Cardiac septum (tissue), 1 donor: ENCODE measurements at regions of chr5 and their contacts with region 1.

Region 1: DNA sequence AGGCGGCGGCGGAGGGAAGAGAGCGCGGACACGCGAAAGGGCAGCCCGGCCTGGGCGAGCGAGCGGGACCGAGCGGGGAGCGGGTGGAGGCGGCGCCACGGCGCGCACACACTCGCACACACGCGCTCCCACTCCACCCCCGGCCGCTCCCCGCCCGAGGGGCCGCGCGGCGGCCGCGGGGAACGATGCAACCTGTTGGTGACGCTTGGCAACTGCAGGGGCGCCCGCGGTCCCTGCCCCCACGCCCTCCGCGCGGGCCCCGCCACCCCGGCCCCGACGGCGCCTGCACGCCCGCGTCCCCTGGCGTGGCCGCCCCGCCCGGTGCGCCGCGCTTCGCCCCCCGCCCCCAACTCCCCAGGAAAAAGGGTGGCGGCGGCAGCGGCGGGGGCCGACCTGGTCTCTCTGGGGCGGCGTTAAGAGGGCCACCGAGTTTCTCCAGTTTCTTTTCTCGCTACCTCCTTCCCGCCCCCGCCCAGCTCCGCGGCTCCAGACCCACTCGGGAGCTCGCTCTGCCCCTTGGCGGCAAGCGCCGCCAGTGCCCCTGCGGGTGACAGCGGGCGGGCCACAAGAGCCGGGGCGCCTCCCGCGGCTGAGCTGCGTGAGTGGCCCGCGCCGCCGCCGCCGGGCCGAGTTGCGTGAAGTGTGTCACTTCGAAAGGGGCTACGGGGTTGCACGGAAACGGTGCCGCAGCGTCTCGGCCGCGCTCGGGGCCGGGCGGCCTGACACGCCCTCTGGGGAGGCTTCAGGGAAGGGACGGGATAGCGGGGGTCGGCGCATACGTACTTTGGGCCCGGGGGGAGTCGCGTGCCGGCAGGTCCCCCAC is at the start of gene NR3C1:
- DNase-seq: peak; percentile 95
- total RNA-seq, gene NR3C1: 68.5 TPM

Region 2: DNA sequence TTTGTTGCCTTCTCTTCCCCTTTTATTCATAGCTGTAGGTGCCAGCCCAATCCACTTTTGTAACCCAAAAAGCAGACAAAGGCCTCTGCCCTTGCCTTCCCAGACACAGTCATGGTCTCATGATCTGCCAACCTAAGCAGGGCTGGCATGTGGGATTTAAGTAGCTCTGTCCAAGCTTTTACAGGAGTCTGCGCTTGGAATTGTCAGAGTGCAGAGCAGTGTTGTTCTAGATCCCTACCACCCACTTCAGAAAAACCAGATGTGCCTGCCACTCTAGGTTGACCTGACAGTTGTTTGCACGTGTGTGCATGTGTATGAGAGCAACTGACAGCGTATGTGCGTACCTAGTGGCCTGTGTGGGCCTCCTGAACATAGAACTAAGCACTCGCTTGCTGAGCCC is 991.2 kb before region 1 on chr5:
- intact Hi-C with region 1: no loop called
- DNase-seq: no peak

Region 3: GRCh38 chr5:143002459-143003328 is 401.1 kb before region 1 on chr5:
- intact Hi-C with region 1: loop called (anchors 2 kb)
- DNase-seq: no peak

Region 4: GRCh38 chr5:143063175-143063970 is 340.4 kb before region 1 on chr5:
- intact Hi-C with region 1: loop called (anchors 5 kb)
- DNase-seq: no peak

Region 5: GRCh38 chr5:143213851-143214363 is 189.9 kb before region 1 on chr5:
- intact Hi-C with region 1: loop called (anchors 5 kb)
- DNase-seq: no peak